Calu3 (cell line): ENCODE measurements at regions of chr2 and their contacts with region 1.

Region 1: GRCh38 chr2:9333591-9334171 is 89.6 kb downstream of the ITGB1BP1 start:
- DNase-seq: peak; percentile 74
- H3K4me3 Mint-ChIP-seq: no peak overlapping the region
- H3K27ac Mint-ChIP-seq: peak overlapping the region; percentile 76
- H3K4me1 Mint-ChIP-seq: peaks cover 61% of the 10 kb centered on the region
- H3K27me3 Mint-ChIP-seq: no peaks in the 10 kb centered on the region
- CTCF ChIP-seq: peak; percentile 35

Region 2: GRCh38 chr2:9240751-9241150 is 92.9 kb before region 1 on chr2:
- CTCF ChIA-PET with region 1: interaction called, 13 read pairs
- intact Hi-C with region 1: no loop called
- DNase-seq: no peak
- H3K4me3 Mint-ChIP-seq: no peak overlapping the region
- H3K27ac Mint-ChIP-seq: peak overlapping the region; percentile 22
- H3K4me1 Mint-ChIP-seq: peaks cover 74% of the 10 kb centered on the region
- H3K27me3 Mint-ChIP-seq: no peaks in the 10 kb centered on the region
- CTCF ChIP-seq: no peak

Region 3: GRCh38 chr2:9378433-9379390 is 45.0 kb after region 1 on chr2:
- CTCF ChIA-PET with region 1: no interaction called
- intact Hi-C with region 1: no loop called
- DNase-seq: no peak
- H3K4me3 Mint-ChIP-seq: no peak overlapping the region
- H3K27ac Mint-ChIP-seq: no peak overlapping the region
- H3K4me1 Mint-ChIP-seq: peaks cover 12% of the 10 kb centered on the region
- H3K27me3 Mint-ChIP-seq: no peaks in the 10 kb centered on the region
- CTCF ChIP-seq: no peak